ENCODE measurements at regions of chr7 and their contacts with region 1.

Region 1: GRCh38 chr7:25125137-25125946 is at the start of gene CYCS:
- DNase-seq: peak; percentile 100
- ATAC-seq: peak; percentile 91
- H3K4me3 ChIP-seq: peak within 1 kb of the TSS; percentile 57 to 94 (median 86)
- H3K4me3 Mint-ChIP-seq: peak within 1 kb of the TSS; percentile 100
- H3K27ac ChIP-seq: peak within 1 kb of the TSS; percentile 96 to 99
- H3K27ac Mint-ChIP-seq: peak within 1 kb of the TSS; percentile 99
- H3K4me1 ChIP-seq: peaks cover 13 to 15% of the 10 kb centered on the region in 2 donors
- H3K4me1 Mint-ChIP-seq: peaks cover 27% of the 10 kb centered on the region
- H3K27me3 ChIP-seq: no peaks in the 10 kb centered on the region
- H3K27me3 Mint-ChIP-seq: no peaks in the 10 kb centered on the region
- CTCF ChIP-seq: no peak
- total RNA-seq, gene CYCS: 48.8 and 51.3 TPM in 2 replicates

Region 2: DNA sequence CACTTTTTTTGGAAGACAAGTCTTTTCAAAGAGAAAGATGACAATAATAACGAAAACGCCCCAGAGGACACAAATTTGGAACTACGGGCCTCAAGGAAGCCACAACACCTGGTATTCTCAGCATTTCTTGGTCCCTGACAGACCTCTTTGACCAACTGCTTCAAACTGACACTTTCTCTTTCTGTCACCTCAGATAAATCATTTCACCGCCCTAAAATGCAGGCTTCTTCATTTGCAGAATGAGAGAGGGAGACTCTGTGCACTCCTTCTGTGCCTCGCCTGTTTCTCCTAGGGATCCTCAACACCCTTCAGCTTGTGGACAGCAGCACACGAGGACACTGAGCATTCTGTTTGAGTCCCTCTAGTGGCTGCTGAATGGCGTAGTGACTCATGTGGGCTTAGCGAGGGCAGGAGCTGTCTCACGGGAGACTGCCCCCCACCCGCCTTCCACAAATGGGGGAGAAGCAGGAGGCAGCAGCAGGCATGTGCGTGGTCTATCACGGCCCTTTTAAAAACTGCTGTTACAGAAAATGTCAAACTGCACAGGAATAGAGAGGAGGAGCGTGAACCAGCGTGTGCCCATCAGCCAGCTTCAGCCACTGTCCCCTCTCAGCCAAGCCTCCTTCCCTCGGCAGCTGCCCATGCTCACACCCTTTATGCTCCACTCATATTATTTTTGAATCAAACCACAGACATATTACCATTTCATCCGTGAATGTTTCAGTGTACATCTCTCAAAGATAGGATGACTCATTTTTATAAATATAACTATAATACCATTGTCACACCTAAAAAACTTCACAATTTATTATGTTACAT is 409.5 kb before region 1 on chr7:
- CTCF ChIA-PET with region 1: no interaction called
- POLR2A ChIA-PET with region 1: no interaction called
- intact Hi-C with region 1: loop called (anchors 10 kb)
- DNase-seq: peak; percentile 56
- ATAC-seq: no peak
- H3K4me3 ChIP-seq: peak overlapping the region in 1 of 5 experiments; percentile 9
- H3K4me3 Mint-ChIP-seq: peak overlapping the region; percentile 68
- H3K27ac ChIP-seq: no peak overlapping the region
- H3K27ac Mint-ChIP-seq: no peak overlapping the region
- H3K4me1 ChIP-seq: peaks cover 52 to 55% of the 10 kb centered on the region in 2 donors
- H3K4me1 Mint-ChIP-seq: peaks cover 61% of the 10 kb centered on the region
- H3K27me3 ChIP-seq: no peaks in the 10 kb centered on the region
- H3K27me3 Mint-ChIP-seq: no peaks in the 10 kb centered on the region
- CTCF ChIP-seq: peak; percentile 56

Region 3: GRCh38 chr7:25167262-25167843 is 42.0 kb after region 1 on chr7:
- CTCF ChIA-PET with region 1: no interaction called
- POLR2A ChIA-PET with region 1: no interaction called
- intact Hi-C with region 1: loop called (anchors 5 kb)
- DNase-seq: no peak
- ATAC-seq: no peak
- H3K4me3 ChIP-seq: no peak overlapping the region
- H3K4me3 Mint-ChIP-seq: no peak overlapping the region
- H3K27ac ChIP-seq: no peak overlapping the region
- H3K27ac Mint-ChIP-seq: no peak overlapping the region
- H3K4me1 ChIP-seq: no peaks in the 10 kb centered on the region
- H3K4me1 Mint-ChIP-seq: no peaks in the 10 kb centered on the region
- H3K27me3 ChIP-seq: no peaks in the 10 kb centered on the region
- H3K27me3 Mint-ChIP-seq: no peaks in the 10 kb centered on the region
- CTCF ChIP-seq: no peak

Region 4: GRCh38 chr7:25179771-25180591 is 54.6 kb after region 1 on chr7:
- CTCF ChIA-PET with region 1: interaction called, 5 read pairs
- POLR2A ChIA-PET with region 1: interaction called, 16 read pairs
- intact Hi-C with region 1: loop called (anchors 1 kb)
- DNase-seq: peak; percentile 97
- ATAC-seq: peak; percentile 99
- H3K4me3 ChIP-seq: peak overlapping the region; percentile 44 to 77 (median 74)
- H3K4me3 Mint-ChIP-seq: peak overlapping the region; percentile 90
- H3K27ac ChIP-seq: peak overlapping the region; percentile 92 to 94
- H3K27ac Mint-ChIP-seq: peak overlapping the region; percentile 96
- H3K4me1 ChIP-seq: peaks cover 7 to 15% of the 10 kb centered on the region in 2 donors
- H3K4me1 Mint-ChIP-seq: peaks cover 17% of the 10 kb centered on the region
- H3K27me3 ChIP-seq: peaks cover 0 to 3% (median 0%) of the 10 kb centered on the region in 4 experiments
- H3K27me3 Mint-ChIP-seq: peaks cover 4% of the 10 kb centered on the region
- CTCF ChIP-seq: peak; percentile 87

Measured in B cell (primary cell).